AG04450 (cell line): ENCODE measurements at regions of chr14 and their contacts with region 1.

Region 1: GRCh38 chr14:29222671-29223268 is 456.2 kb downstream of the FOXG1 start:
- DNase-seq: peak; percentile 41
- H3K4me3 ChIP-seq: 0 out of 2 replicates have a peak overlapping the region, but pooled peaks have one; percentile 5
- H3K27ac ChIP-seq: no peak overlapping the region
- H3K27me3 ChIP-seq: no peaks in the 10 kb centered on the region
- CTCF ChIP-seq: peak; percentile 88

Region 2: GRCh38 chr14:29016050-29016900 is 206.5 kb before region 1 on chr14:
- CTCF ChIA-PET with region 1: interaction called, 19 read pairs
- POLR2A ChIA-PET with region 1: no interaction called
- DNase-seq: no peak
- H3K4me3 ChIP-seq: no peak overlapping the region
- H3K27ac ChIP-seq: no peak overlapping the region
- H3K27me3 ChIP-seq: no peaks in the 10 kb centered on the region
- CTCF ChIP-seq: peak; percentile 92

Region 3: GRCh38 chr14:29126361-29126760 is 96.4 kb before region 1 on chr14:
- CTCF ChIA-PET with region 1: no interaction called
- POLR2A ChIA-PET with region 1: no interaction called
- DNase-seq: no peak
- H3K4me3 ChIP-seq: no peak overlapping the region
- H3K27ac ChIP-seq: no peak overlapping the region
- H3K27me3 ChIP-seq: no peaks in the 10 kb centered on the region
- CTCF ChIP-seq: no peak

Region 4: DNA sequence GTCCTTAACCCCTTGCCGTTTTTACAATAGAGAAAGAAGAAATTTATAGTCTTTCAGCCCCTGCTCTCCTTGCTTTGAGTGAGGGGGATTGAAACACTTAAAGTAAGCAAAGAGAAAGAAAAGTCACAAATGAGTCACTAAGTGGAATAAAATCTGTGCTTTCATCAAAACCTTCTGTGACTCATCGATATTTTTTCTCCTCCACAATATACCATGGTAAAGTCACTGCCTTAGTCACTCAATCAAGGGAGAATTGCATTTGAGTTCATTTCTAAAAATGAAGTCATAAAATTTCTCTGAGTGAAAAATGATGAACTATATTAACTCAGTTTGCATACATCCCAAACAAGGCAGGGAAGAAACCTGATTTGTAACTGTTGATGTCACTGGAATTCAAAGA is 14.1 kb after region 1 on chr14:
- CTCF ChIA-PET with region 1: interaction called, 31 read pairs
- POLR2A ChIA-PET with region 1: no interaction called
- DNase-seq: peak; percentile 30
- H3K4me3 ChIP-seq: no peak overlapping the region; the same call in 1 of the 2 replicates
- H3K27ac ChIP-seq: no peak overlapping the region
- H3K27me3 ChIP-seq: no peaks in the 10 kb centered on the region
- CTCF ChIP-seq: no peak

Region 5: DNA sequence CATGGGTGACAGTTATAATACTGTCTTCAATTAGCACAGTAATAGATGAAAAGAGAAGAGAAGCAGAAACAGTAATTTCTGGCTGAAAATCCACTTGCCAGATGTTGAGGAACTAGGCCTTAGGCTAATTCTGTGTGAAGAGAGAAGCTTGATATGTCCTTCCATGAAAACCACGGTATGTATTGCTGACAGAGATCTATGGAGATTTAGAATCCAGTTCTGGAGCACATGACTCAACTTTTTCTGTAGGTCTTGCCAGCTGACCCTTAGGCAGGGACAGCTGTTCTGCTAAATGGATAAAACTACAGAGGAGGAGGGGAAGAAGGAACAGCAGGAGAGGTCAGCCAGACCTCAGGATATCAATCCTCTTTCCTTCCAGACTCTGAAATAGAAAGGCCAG is 493.4 kb after region 1 on chr14:
- CTCF ChIA-PET with region 1: no interaction called
- POLR2A ChIA-PET with region 1: no interaction called
- DNase-seq: peak; percentile 11
- H3K4me3 ChIP-seq: no peak overlapping the region
- H3K27ac ChIP-seq: no peak overlapping the region
- H3K27me3 ChIP-seq: no peaks in the 10 kb centered on the region
- CTCF ChIP-seq: no peak